Posterior cingulate gyrus (tissue), 11 donors: ENCODE measurements at regions of chr10 and their contacts with region 1.

Region 1: DNA sequence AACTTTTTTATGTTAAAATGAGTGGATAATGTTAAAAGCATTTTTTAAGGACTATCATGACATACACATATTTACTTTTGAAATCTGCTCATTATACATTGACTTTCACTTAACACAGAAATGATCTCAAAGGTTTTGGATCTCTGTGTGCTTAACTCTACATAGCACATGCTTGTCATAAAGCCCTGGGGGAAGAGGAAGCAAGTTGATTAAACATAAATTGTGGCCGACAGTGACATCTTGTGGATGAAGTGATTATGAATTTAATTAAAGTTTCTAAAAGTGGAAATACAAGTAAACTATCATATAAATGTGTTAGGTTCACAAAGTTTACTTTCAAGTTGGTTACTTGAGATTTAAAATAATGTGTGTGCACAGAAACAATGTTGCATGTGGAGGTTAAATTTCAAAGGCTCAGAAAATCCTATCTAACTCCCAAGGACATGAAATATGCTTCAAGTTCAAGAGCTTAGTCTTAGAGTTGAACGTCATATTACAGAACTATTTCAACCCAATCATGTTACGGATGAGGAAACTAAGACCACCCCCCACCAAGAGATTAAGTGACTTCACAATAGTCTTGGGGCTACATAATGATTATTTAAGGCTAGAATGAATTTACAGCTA is 1247.7 kb downstream of the GATA3 start:
- DNase-seq: no peak

Region 2: GRCh38 chr10:7687228-7687907 is 1614.9 kb before region 1 on chr10:
- intact Hi-C with region 1: loop called (anchors 10 kb)
- DNase-seq: peak; percentile 52 to 97 (median 82)

Region 3: DNA sequence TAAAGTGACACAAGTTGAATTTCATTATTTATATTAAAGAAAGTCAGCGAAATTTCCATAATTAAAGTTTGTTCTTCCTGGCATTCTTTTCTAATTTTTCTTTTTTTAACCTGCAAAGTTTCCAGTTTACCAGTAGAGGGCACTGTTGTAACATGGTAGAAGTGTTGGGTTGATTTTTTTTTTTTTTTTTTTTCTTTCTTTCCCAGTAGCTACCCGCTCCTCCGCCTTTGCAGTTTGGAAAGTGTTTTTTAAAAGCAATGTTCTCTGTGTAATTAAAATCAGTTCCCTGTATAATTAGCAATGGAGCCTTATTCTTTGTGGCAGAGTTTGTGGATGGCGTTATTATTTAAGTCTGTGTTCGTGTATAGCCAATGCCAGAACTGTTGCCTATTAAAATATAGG is 1430.2 kb before region 1 on chr10:
- intact Hi-C with region 1: loop called (anchors 2 kb)
- DNase-seq: no peak

Region 4: DNA sequence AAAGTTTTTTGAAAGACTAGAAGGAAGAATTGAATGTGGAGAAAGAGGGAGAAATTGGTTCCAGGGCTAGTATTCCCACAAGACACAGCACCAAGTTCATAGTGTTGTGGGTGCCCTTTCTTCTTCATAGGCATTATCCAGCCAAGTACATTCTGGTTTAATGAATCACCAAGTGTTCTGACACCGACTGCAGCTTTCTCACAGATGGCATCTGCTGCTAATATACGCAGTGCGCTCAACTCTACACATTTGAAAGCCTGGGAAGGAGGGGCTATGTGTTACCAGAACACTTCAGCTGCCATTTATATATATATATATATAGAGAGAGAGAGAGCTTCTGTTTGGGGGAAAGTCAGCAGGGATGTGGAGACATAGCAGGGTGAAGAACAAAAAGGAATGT is 79.3 kb before region 1 on chr10:
- intact Hi-C with region 1: no loop called
- DNase-seq: no peak

Region 5: DNA sequence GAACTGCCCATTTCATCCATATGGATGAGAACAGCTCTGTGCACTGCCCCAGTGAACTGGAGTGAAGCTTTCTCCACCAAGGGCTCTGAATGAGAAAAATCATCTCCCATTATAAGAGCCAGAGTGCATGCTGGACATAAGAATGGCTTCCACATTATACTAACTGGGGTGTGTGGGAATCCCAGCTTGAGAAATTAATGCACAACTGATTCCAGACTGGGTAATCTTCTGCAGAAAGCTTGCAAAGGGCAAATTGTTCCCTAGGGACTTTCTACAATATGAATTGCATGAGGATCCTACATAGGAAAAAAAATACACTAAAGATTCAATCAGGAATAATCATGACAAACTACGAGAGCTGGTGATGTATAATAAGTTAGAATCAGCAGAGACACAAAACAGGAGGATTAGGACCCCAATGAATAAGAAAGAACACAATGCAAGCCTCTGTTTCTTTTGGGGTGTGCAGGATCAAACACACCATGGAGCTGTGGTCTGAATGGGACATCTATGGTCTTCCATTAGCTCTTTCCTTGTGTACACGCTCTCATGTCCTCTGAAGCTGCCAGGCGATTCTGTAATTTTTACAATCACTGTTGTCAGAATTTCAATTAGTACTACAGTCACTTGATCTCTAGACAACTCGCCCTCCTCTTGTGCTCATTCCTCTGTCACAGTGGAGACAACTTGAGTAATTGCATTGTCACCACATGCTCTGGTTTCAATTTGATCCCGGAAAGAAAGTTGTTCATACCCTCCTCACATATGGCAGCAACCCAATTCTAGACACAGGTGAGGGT is 79.7 kb after region 1 on chr10:
- intact Hi-C with region 1: no loop called
- DNase-seq: no peak